MCF 10A (cell line): ENCODE measurements at regions of chr1 and their contacts with region 1.

Region 1: GRCh38 chr1:241627453-241628259 is 12.5 kb downstream of the CHML start:
- DNase-seq: peak; percentile 92
- H3K4me3 Mint-ChIP-seq: no peak overlapping the region
- H3K27ac Mint-ChIP-seq: peak overlapping the region; percentile 52
- H3K4me1 Mint-ChIP-seq: peaks cover 58% of the 10 kb centered on the region
- H3K27me3 Mint-ChIP-seq: no peaks in the 10 kb centered on the region
- CTCF ChIP-seq: peak; percentile 80

Region 2: DNA sequence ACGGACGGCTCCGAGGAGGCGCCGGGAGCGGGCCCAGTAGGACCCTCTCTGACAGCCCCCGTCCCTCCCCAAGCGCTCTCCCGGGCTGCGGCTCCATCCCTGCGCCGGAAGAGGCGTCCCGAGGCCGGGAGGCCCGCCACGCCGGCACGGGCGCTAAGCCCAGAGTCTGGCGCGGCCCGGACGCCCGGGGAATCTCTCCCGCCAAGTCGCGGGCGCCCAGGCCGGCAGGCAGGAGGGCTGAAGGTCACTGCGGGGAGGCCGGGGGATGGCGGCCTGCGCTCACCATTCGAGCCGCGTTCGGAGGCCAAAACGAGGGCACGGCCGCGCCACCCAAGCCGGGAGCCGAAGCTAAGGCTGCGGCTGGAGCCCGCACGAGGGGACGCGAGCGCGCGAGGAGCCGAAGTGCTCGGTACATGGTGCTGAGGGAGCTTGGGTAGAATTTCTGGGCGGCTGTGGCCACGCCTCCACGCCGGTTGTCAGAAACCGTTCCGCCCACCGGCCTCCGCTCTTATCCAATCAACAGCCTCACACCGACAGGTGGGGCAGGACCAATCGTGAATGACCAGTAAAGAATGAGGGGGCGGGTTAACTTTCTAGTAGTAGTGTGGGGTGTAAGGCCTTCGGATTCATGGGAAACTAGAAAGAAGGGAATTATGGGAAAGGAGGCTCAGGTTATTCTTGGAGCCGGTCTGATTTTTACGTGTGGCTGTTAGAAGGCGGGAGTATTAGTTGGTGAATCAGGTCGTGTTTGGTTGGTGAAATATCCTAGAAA is 108.2 kb before region 1 on chr1 and contains the start of gene FH:
- CTCF ChIA-PET with region 1: interaction called, 11 read pairs
- POLR2A ChIA-PET with region 1: interaction called, 16 read pairs
- intact Hi-C with region 1: no loop called
- DNase-seq: peak; percentile 100
- H3K4me3 Mint-ChIP-seq: no peak within 1 kb of the TSS
- H3K27ac Mint-ChIP-seq: peak within 1 kb of the TSS; percentile 67
- H3K4me1 Mint-ChIP-seq: peaks cover 19% of the 10 kb centered on the region
- H3K27me3 Mint-ChIP-seq: peaks cover 13% of the 10 kb centered on the region
- CTCF ChIP-seq: no peak
- total RNA-seq, gene FH: 136 and 215 TPM in 2 replicates

Region 3: GRCh38 chr1:241582921-241583331 is 44.7 kb before region 1 on chr1:
- CTCF ChIA-PET with region 1: no interaction called
- POLR2A ChIA-PET with region 1: interaction called, 3 read pairs
- intact Hi-C with region 1: loop called (anchors 2 kb)
- DNase-seq: peak; percentile 75
- H3K4me3 Mint-ChIP-seq: no peak overlapping the region
- H3K27ac Mint-ChIP-seq: peak overlapping the region; percentile 73
- H3K4me1 Mint-ChIP-seq: peaks cover 8% of the 10 kb centered on the region
- H3K27me3 Mint-ChIP-seq: no peaks in the 10 kb centered on the region
- CTCF ChIP-seq: no peak

Region 4: GRCh38 chr1:241600496-241600901 is 27.2 kb before region 1 on chr1:
- CTCF ChIA-PET with region 1: interaction called, 10 read pairs
- POLR2A ChIA-PET with region 1: no interaction called
- intact Hi-C with region 1: no loop called
- DNase-seq: peak; percentile 58
- H3K4me3 Mint-ChIP-seq: no peak overlapping the region
- H3K27ac Mint-ChIP-seq: peak overlapping the region; percentile 77
- H3K4me1 Mint-ChIP-seq: peaks cover 52% of the 10 kb centered on the region
- H3K27me3 Mint-ChIP-seq: no peaks in the 10 kb centered on the region
- CTCF ChIP-seq: no peak

Region 5: GRCh38 chr1:241834733-241835377 is 207.2 kb after region 1 on chr1:
- CTCF ChIA-PET with region 1: interaction called, 19 read pairs
- POLR2A ChIA-PET with region 1: interaction called, 7 read pairs
- intact Hi-C with region 1: loop called (anchors 1 kb)
- DNase-seq: peak; percentile 75
- H3K4me3 Mint-ChIP-seq: no peak overlapping the region
- H3K27ac Mint-ChIP-seq: peak overlapping the region; percentile 36
- H3K4me1 Mint-ChIP-seq: peaks cover 22% of the 10 kb centered on the region
- H3K27me3 Mint-ChIP-seq: no peaks in the 10 kb centered on the region
- CTCF ChIP-seq: peak; percentile 98